ENCODE measurements at regions of chr12 and their contacts with region 1.

Region 1: GRCh38 chr12:120301962-120302815 is at the start of gene SIRT4:
- DNase-seq: peak; percentile 93
- H3K27ac ChIP-seq: peak within 1 kb of the TSS; percentile 31; the same call in 1 of the 2 replicates
- CTCF ChIP-seq: peak; percentile 92

Region 2: GRCh38 chr12:120086801-120087621 is 215.2 kb before region 1 on chr12:
- CTCF ChIA-PET with region 1: no interaction called
- POLR2A ChIA-PET with region 1: no interaction called
- DNase-seq: peak; percentile 98
- H3K27ac ChIP-seq: peak overlapping the region; percentile 81
- CTCF ChIP-seq: peak; percentile 96

Region 3: DNA sequence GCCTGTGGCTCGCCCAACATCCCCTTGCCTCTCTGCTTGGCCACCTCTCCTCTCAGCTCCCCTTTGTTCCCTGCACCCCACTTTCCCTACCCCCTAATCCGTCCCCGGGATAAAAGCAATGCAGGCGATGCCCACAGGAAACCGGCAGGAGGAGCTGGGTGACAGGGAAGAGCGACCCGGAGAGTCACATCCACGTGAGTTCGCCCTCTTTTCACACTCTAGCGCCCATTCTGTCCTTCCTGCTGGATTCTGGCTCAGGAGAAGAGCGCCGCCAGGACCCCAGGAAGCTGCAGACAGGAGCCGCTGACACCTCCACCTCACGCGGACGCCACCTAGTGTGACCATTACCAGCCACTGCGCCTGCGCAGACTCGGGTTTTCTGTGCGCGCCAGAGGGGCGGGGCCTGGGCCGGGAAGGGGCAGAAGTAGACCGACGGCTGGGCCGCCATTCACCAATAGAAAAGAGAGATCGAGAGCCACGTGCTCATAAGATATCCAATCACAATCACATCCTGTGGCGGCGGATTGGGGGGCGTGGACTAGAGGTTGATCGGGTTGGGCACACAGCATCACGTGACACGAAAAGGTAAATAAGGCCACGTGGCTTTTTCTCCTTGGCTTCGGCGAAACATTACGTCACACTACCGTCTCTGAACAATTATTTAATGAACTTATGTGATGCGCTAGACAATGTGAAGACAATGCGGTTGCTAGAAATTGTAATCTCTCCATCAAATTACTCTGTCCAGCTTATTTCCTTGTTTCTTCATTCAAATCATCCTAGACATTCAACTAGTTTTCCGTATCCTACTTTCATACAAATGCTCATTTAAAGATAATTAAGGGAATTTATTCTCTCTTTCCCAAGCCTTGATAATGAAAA is 15.3 kb after region 1 on chr12:
- CTCF ChIA-PET with region 1: interaction called, 12 read pairs
- POLR2A ChIA-PET with region 1: no interaction called
- DNase-seq: peak; percentile 100
- H3K27ac ChIP-seq: peak overlapping the region; percentile 77
- CTCF ChIP-seq: peak; percentile 63

Region 4: DNA sequence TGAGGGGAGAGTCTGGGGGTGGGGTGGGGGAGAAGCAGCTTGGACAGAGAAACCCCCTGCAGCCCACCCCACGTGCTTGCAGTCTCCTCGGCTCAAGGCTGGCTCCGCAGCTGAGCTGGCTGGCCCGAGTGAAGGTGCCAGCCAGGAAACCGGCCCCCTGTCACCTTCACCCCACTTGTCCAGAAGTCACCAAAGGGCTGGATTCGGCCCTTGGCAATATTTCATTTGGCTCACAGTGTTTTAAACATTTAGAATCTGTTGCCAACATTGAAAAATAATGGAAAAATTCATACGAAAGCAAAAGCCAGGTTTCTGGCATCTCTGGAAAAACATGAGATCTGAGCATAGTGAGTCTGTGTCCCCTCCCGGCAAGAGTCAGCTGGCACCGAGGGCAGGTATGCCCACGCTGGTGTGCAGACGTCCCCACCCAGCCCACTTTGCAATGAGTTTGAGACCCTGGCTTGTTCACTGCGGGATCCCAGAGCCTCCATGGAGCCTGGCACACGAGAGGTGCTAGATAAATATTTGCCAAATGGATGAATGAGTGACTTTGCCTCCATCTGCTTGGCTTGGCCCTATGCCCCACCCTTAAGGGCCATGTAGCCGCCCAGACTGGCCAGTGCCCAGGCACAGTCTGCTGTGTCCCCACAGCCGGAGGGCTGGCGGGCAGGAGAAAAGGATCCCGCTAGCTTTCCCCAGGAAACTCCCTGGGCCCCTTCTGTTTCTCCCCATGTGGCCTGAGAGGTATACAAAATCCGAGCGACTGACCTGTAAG is 48.6 kb after region 1 on chr12:
- CTCF ChIA-PET with region 1: no interaction called
- POLR2A ChIA-PET with region 1: no interaction called
- DNase-seq: no peak
- H3K27ac ChIP-seq: no peak overlapping the region
- CTCF ChIP-seq: no peak

Region 5: GRCh38 chr12:120457133-120457532 is 154.9 kb after region 1 on chr12:
- CTCF ChIA-PET with region 1: no interaction called
- POLR2A ChIA-PET with region 1: no interaction called
- DNase-seq: no peak
- H3K27ac ChIP-seq: no peak overlapping the region
- CTCF ChIP-seq: peak; percentile 16; the same call in 1 of the 2 replicates